HepG2 (cell line): ENCODE measurements at regions of chr2 and their contacts with region 1.

Region 1: DNA sequence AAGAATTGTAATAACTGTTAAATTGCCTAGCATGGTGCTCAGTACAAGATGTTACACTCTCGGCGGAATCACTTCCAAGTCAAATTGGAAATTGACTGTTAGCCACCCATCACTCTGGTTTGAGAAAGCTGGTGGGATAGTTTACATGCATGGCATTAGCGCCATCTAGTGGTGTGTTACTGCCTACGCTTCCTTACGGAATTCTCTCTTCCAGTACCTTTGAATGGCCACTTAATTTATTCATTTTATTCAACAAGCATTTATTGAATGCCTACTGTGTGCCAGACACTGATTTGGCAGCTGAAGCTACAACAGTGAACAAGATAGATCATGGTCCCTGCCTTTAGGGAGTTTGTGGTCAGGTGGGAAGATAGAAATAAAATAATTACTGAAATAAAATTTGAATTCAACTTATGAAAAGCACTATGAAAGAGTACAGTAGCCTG is 171.2 kb downstream of the TMEM247 start:
- DNase-seq: peak; percentile 82
- ATAC-seq: peak; percentile 72
- H3K4me3 ChIP-seq: no peak overlapping the region
- H3K27ac ChIP-seq: no peak overlapping the region
- H3K4me1 ChIP-seq: peaks cover 28% of the 10 kb centered on the region
- H3K27me3 ChIP-seq: peaks cover 0 to 6% of the 10 kb centered on the region in 2 experiments; a peak in 1 of 5 replicates
- CTCF ChIP-seq: peak; percentile 96
- EP300 ChIP-seq: no peak
- POLR2A ChIP-seq: no peak
- RAD21 ChIP-seq: peak; percentile 93

Region 2: GRCh38 chr2:46062637-46063412 is 587.8 kb before region 1 on chr2:
- CTCF ChIA-PET with region 1: no interaction called
- POLR2A ChIA-PET with region 1: no interaction called
- in situ Hi-C with region 1: no loop called
- intact Hi-C with region 1: loop called (anchors 1 kb)
- DNase-seq: peak; percentile 80
- ATAC-seq: peak; percentile 91
- H3K4me3 ChIP-seq: no peak overlapping the region
- H3K27ac ChIP-seq: no peak overlapping the region
- H3K4me1 ChIP-seq: peaks cover 6% of the 10 kb centered on the region; the same call in 1 of the 2 replicates
- H3K27me3 ChIP-seq: no peaks in the 10 kb centered on the region
- CTCF ChIP-seq: peak; percentile 93
- EP300 ChIP-seq: no peak
- POLR2A ChIP-seq: no peak
- RAD21 ChIP-seq: peak; percentile 89

Region 3: DNA sequence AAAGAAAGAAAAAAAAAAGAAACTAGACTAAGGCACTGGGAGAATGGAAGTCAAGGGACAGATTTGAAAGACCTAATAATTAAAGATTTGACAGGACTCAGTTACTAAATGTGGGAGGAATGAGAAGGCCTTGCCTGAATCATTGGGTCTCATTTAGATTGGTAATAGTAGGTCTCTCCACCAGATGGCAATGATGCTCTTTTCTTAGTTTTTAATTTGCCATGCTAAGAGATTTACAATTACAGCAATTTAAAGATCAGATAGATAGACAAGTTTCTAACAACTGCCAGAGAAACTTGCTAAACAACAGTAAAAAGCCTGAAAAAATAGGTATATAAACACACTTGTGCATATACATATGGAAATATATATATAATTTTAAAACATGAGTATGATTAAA is 18.2 kb before region 1 on chr2:
- CTCF ChIA-PET with region 1: interaction called, 35 read pairs
- POLR2A ChIA-PET with region 1: interaction called, 3 read pairs
- in situ Hi-C with region 1: no loop called
- intact Hi-C with region 1: loop called (anchors 1 kb)
- DNase-seq: peak; percentile 50
- ATAC-seq: peak; percentile 55; the same call in 2 of the 3 replicates
- H3K4me3 ChIP-seq: no peak overlapping the region
- H3K27ac ChIP-seq: no peak overlapping the region
- H3K4me1 ChIP-seq: no peaks in the 10 kb centered on the region
- H3K27me3 ChIP-seq: no peaks in the 10 kb centered on the region
- CTCF ChIP-seq: peak; percentile 61
- EP300 ChIP-seq: no peak
- POLR2A ChIP-seq: no peak
- RAD21 ChIP-seq: peak; percentile 63; the same call in 1 of the 2 replicates